ENCODE measurements at regions of chr18 and their contacts with region 1.

Region 1: DNA sequence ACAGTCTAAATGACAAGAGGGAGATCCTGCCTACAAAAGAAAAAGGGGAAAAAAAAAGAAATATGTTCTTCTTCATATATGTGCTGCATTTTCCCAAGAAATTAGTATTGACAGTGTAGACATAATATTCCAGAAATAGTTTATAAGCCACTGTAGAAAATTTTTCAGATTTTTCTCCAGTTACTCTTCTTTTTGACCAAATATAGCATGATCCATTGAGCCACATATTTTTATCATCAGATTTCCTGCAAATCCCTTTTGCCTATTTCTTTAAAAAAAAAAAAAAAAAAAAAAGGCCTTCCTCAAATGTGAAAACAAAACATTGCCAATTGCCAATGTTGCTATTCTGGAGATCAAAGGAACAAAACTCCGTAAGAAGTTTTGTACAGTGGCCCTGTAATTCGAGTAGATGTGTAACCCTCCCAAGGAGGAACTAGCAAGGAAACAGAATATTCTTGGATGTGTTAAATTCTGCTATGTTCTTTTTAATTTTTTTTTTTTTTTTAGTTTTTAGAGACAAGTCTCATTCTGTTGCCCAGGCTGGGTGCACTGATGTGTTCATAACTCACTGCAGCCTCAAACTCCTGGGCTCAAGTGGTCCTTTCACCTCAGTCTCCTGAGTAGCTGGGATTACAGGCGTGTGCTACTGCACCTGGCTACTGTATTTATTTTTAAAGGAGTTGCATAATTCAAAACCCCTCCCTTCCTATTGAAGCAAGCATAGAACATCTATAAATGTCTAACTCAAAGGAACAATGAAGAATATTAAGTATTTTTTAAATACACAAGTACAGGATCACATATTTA is 12.5 kb upstream of the CABYR start:
- DNase-seq: no peak
- ATAC-seq: no peak
- H3K4me3 ChIP-seq: no peak overlapping the region
- H3K27ac ChIP-seq: no peak overlapping the region
- H3K4me1 ChIP-seq: peaks cover 0 to 5% (median 0%) of the 10 kb centered on the region in 9 donors
- H3K27me3 ChIP-seq: no peaks in the 10 kb centered on the region
- CTCF ChIP-seq: no peak

Region 2: DNA sequence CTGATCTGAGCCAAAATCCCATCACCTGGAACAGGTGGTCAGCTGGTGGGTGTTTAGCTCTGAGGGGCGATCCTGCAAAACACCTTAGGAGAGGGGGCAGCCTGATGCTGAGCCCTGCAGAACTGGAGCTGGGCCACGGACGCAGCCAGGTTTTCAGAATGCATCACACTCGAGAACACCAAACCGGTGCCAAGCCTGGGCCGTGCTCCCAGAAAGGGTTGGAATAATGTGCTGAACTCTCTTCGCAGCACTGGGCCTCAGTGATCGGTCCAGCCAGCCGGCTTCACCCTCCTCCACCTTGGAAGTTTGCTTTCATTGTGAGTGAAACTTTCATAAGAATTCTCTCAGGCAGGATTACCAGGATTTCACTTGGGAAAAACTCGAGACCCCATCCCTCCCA is 168.3 kb before region 1 on chr18:
- intact Hi-C with region 1: loop called in 1 of 10 experiments (anchors 10 kb)
- DNase-seq: peak; percentile 74 to 78
- ATAC-seq: peak; percentile 86 to 98 (median 94)
- H3K4me3 ChIP-seq: no peak overlapping the region
- H3K27ac ChIP-seq: peak overlapping the region in 2 of 10 donors; percentile 32 to 36
- H3K4me1 ChIP-seq: peaks cover 0 to 3% (median 0%) of the 10 kb centered on the region in 9 donors
- H3K27me3 ChIP-seq: no peaks in the 10 kb centered on the region
- CTCF ChIP-seq: no peak

Region 3: GRCh38 chr18:24051031-24051947 is 75.1 kb before region 1 on chr18:
- intact Hi-C with region 1: no loop called
- DNase-seq: no peak
- ATAC-seq: no peak
- H3K4me3 ChIP-seq: no peak overlapping the region
- H3K27ac ChIP-seq: no peak overlapping the region
- H3K4me1 ChIP-seq: peaks cover 0 to 29% (median 0%) of the 10 kb centered on the region in 9 donors
- H3K27me3 ChIP-seq: no peaks in the 10 kb centered on the region
- CTCF ChIP-seq: no peak